Ascending aorta (tissue), 2 donors: ENCODE measurements at regions of chr14 and their contacts with region 1.

Region 1: DNA sequence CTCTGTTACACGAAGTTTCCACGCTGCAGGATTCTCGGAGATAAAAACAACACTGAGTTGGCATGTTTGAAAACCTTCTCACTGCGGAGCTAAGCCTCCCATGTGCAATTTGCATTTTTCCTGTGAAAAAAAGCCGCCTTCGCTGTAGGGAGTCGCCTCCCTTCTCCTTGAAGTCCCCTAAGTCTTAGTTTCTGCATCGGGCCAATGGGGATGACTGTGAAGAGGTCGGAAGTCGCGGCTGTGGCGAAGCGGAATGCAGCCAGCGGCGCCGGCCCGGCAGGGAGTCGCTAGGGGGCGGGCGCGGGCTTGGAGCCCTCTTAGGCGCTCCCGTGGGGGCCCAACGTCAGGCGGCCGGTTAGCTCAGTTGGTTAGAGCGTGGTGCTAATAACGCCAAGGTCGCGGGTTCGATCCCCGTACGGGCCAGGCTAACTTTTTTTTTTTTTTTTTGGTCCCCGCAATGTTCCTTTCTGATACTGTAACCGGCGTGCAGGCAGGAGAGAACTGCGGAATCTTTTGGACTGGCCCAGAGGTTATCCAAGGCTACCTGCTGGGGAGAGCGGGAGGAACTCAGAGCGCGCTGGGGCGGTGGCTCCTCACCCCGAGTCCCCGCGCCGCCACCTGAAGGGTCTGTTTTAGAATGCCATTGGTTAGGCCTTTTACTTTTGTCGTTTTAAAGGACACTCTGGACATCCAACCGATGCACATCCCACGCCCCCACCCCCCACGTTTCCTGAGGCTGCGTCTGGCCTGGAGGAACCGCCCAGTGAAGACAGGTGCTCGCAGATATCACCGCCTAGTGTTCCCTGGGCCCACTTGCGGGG is 2.6 kb upstream of the ZNF839 start:
- DNase-seq: peak; percentile 60 to 97
- H3K4me3 ChIP-seq: peak overlapping the region; percentile 51 to 66
- H3K27ac ChIP-seq: peak overlapping the region; percentile 69 to 79
- H3K4me1 ChIP-seq: peaks cover 11 to 30% of the 10 kb centered on the region in 2 donors
- H3K27me3 ChIP-seq: no peaks in the 10 kb centered on the region
- CTCF ChIP-seq: peak; percentile 81 to 95 (median 84)

Region 2: DNA sequence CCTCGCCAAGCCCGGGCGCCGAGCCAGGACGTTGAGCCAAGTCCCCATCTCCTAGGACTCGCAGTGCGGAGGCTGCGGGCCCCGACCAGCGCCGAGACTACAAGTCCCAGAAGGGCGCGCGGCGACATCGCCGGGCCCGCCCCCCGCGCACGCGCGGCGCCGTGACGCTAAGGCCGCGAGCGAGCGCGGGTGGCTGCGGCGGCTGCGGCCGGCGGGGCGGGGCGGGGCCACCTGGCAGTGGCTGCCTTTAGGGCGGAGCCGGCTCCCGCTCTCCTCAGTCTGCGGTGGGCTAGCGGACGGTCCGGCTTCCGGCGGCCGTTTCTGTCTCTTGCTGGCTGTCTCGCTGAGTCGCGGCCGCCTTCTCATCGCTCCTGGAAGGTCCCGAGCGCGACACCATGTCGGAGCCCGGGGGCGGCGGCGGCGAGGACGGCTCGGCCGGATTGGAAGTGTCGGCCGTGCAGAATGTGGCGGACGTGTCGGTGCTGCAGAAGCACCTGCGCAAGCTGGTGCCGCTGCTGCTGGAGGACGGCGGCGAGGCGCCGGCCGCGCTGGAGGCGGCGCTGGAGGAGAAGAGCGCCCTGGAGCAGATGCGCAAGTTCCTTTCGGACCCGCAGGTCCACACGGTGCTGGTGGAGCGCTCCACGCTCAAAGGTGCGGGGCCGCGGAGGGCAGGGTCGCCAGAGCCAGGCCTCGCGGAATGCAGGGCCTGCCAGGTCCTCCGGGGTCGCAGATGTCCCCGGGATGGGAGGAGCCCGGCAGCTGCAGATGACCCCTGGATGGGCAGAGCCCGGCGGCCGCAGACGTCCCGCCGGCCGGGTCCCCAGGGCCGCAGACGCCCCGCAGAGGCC is 352.4 kb before region 1 on chr14 and contains the start of gene DYNC1H1:
- intact Hi-C with region 1: loop called (anchors 5 kb)
- DNase-seq: peak; percentile 77 to 96
- H3K4me3 ChIP-seq: peak within 1 kb of the TSS; percentile 100
- H3K27ac ChIP-seq: peak within 1 kb of the TSS; percentile 93 to 95
- H3K4me1 ChIP-seq: peaks cover 2 to 6% of the 10 kb centered on the region in 2 donors
- H3K27me3 ChIP-seq: no peaks in the 10 kb centered on the region
- CTCF ChIP-seq: no peak
- total RNA-seq, gene DYNC1H1: 577 TPM

Region 3: DNA sequence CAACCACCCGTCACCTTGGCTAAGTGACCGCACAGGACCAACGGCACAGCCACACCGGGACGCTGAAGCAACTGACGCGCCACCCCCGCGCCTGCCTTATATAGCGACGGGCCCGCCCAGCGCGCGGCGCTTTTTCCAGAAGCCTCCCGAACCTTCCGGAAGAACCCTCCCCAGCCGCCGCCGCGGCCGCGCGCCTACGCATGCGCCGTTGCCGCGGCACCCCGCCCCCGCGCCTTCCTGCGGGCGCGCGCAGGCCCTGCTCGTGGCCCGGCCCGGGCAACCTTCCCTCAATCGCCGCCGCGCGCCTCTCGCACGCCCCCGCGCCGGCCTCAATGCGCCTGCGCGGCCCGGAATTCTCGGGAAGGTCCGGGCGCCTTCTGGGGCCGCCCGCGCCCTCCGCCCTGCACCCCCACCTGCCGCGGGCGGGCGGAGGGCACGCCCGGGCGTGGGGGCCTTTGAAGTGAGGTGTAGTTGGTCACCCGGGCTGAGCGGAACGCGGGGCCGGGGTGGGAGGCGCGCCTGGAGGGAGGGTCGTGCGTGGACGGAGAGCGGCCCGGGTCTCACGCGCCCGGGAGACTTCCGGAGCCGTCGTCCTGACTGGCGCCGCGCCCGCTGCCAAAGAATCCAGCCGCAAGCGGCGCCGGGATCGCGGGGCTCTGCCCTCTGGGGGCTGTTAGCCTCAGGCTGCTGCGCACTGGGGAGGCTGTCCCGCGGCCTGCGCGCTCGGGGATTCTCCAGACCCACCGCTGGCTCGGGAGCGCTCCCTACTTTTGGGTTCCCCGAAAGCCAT is 229.8 kb before region 1 on chr14 and contains the start of gene HSP90AA1:
- intact Hi-C with region 1: loop called (anchors 2 kb)
- DNase-seq: peak; percentile 75 to 96
- H3K4me3 ChIP-seq: peak within 1 kb of the TSS; percentile 89 to 97
- H3K27ac ChIP-seq: peak within 1 kb of the TSS; percentile 98 to 100
- H3K4me1 ChIP-seq: peaks cover 13 to 37% of the 10 kb centered on the region in 2 donors
- H3K27me3 ChIP-seq: no peaks in the 10 kb centered on the region
- CTCF ChIP-seq: peak in 2 of 3 experiments; percentile 19 to 29
- total RNA-seq, gene HSP90AA1: 120 TPM

Region 4: GRCh38 chr14:102235275-102235897 is 81.6 kb before region 1 on chr14:
- intact Hi-C with region 1: loop called (anchors 1 kb)
- DNase-seq: peak; percentile 24 to 91
- H3K4me3 ChIP-seq: peak overlapping the region in 1 of 2 donors; percentile 53
- H3K27ac ChIP-seq: peak overlapping the region in 1 of 2 donors; percentile 20
- H3K4me1 ChIP-seq: no peaks in the 10 kb centered on the region
- H3K27me3 ChIP-seq: no peaks in the 10 kb centered on the region
- CTCF ChIP-seq: peak; percentile 85 to 86 (median 85)

Region 5: DNA sequence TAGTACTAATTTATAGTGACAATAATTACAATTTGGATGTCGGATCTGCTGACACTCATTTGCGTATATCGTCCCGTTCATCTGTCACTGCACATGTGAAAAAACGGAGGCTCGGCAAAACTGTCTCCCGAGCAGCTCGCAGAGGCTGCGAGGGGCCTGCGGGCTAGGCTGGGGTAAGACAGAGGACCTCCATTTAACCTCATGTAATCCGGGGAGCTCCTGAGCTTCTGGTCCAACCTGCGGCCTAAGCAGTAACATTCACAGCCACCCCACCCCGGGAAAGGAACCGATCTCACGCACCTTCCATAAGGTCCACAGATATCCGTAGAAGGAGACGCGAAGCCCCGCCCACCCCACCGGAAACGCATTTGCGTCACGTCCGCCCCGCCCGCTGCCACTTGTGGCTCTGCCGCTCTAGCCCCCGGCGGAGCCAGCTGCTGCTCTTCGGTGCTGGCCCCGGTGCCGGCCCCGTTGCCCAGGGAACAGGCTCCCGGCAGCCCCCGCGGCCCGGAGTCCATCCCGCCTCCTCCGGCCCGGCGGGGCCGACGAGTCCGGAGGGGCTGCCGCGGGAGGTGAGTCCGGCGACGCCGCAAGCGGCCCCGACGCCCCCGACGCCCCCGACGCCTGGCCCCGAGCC is 45.7 kb after region 1 on chr14 and contains the starts of genes CINP and TECPR2:
- intact Hi-C with region 1: loop called (anchors 1 kb)
- DNase-seq: peak; percentile 90 to 99
- H3K4me3 ChIP-seq: peak within 1 kb of the TSS; percentile 86 to 93
- H3K27ac ChIP-seq: peak within 1 kb of the TSS; percentile 91 to 95
- H3K4me1 ChIP-seq: peaks cover 0 to 16% of the 10 kb centered on the region in 2 donors
- H3K27me3 ChIP-seq: no peaks in the 10 kb centered on the region
- CTCF ChIP-seq: no peak
- total RNA-seq, gene CINP: 6.8 TPM
- total RNA-seq, gene TECPR2: 27.0 TPM

Region 6: DNA sequence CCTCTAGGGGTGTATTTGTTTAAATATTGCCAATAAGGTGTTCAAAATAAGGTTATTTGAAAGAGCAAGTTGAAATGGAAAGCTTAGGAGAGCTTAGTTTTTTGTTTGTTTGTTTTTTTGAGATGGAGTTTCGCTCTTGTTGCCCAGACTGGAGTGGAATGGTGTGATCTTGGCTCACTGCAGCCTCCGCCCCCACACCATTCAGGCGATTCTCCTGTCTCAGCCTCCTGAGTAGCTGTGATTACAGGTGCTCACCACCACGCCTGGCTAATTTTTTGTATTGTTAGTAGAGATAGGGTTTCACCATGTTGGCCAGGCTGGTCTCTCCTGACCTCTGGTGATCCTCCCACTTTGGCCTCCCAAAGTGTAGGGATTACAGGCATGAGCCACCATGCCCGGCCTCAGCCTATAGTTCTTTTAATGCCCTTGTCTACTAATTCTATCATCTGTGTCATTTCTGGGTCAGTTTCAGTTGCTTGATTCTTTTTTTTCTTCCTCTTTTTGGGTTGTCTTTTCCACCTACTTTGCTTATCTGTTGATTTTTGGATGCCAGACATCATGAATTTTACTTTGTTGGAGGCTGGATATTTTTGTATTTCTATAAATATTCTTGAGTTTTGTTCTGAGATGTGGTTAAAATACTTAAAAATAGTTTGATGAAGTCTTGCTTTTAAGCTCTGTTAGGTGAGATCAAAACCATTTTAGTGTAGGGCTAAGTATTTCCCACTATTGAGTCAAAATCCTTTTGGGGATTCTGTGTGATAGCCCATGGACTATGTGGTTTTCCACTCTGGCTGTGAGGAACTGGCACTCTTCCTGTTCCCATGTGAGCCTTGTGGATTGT is 294.2 kb after region 1 on chr14:
- intact Hi-C with region 1: no loop called
- DNase-seq: no peak
- H3K4me3 ChIP-seq: no peak overlapping the region
- H3K27ac ChIP-seq: no peak overlapping the region
- H3K4me1 ChIP-seq: peaks cover 0 to 11% of the 10 kb centered on the region in 2 donors
- H3K27me3 ChIP-seq: no peaks in the 10 kb centered on the region
- CTCF ChIP-seq: no peak

Region 7: GRCh38 chr14:103333754-103334643 is 1017.0 kb after region 1 on chr14 and contains the start of gene EIF5:
- intact Hi-C with region 1: loop called (anchors 10 kb)
- DNase-seq: peak; percentile 93 to 100
- H3K4me3 ChIP-seq: peak within 1 kb of the TSS; percentile 96 to 97
- H3K27ac ChIP-seq: peak within 1 kb of the TSS; percentile 100
- H3K4me1 ChIP-seq: peaks cover 0 to 17% of the 10 kb centered on the region in 2 donors
- H3K27me3 ChIP-seq: no peaks in the 10 kb centered on the region
- CTCF ChIP-seq: peak; percentile 9 to 56 (median 22)
- total RNA-seq, gene EIF5: 85.5 TPM